WTC11 (cell line): ENCODE measurements at regions of chr11 and their contacts with region 1.

Region 1: DNA sequence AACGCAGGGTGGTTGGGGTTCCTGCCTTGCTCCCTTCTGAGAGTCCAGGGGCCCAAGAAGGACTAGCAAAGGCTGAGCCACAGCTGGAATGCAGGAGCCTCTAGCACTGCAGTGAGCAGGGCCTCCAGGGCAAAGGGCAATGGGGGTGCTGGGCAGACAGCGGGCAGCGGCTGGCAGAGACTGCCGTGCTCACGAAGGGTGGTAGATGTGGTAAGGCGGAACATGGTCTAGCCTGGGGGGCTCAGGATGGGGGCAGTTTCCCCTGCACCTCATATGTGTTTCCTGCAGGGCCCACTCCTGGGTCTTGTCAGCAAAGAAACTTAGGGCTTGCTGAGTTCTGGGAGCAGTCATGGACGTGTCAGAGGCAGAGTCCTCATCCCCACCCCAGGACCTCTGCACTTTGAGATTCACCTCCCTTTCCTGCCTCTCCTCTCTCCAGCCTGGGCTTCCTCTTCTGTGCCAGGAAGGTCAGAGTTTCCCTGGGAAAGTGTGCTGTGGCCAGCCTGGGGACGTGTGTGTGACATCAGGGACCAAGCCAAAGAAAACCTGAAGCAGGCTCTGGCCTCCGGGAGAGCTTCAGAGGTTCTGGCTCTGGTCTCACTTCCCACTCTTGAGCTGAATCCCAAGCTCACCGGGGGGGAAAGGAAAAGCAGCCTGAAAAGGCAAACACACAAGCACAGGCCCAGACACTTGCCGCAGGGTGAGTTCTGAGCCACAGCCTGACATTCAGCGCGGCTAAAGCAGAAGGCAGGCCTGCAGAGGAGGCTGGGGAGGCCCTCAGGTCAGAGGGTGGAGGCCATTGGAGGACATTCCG is 4.4 kb downstream of the MOGAT2 start:
- DNase-seq: no peak
- ATAC-seq: no peak
- H3K4me3 Mint-ChIP-seq: no peak overlapping the region
- H3K27ac Mint-ChIP-seq: no peak overlapping the region
- H3K4me1 Mint-ChIP-seq: peaks cover 2% of the 10 kb centered on the region
- H3K27me3 Mint-ChIP-seq: peaks cover 25% of the 10 kb centered on the region
- CTCF ChIP-seq: no peak

Region 2: DNA sequence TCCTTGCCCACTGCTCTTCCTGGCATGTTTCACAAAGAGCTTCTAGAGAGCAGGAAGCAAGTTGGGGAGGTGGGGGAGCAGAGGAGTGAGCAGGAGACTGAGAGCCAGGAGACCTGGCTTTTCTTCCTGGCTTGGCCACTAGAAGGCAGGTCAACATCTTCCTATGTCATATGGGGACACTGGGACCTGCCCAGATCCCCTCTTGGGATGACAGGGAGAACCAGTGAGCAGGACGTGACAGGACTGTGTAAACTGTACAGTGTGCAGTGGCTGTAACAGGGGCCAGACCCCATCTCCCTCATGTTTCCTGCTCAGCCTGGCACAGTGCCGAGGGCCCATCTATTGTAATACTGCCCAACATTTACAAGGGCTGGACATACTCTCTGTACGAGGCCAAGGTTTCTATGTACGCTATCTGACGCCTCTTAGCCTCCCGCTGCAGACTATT is 225.7 kb before region 1 on chr11:
- CTCF ChIA-PET with region 1: no interaction called
- POLR2A ChIA-PET with region 1: no interaction called
- DNase-seq: peak; percentile 33
- ATAC-seq: peak; percentile 84
- H3K4me3 Mint-ChIP-seq: no peak overlapping the region
- H3K27ac Mint-ChIP-seq: no peak overlapping the region
- H3K4me1 Mint-ChIP-seq: peaks cover 15% of the 10 kb centered on the region
- H3K27me3 Mint-ChIP-seq: no peaks in the 10 kb centered on the region
- CTCF ChIP-seq: no peak

Region 3: GRCh38 chr11:75706260-75706729 is 15.8 kb before region 1 on chr11:
- CTCF ChIA-PET with region 1: interaction called, 18 read pairs
- POLR2A ChIA-PET with region 1: interaction called, 3 read pairs
- DNase-seq: peak; percentile 80
- ATAC-seq: peak; percentile 99
- H3K4me3 Mint-ChIP-seq: no peak overlapping the region
- H3K27ac Mint-ChIP-seq: no peak overlapping the region
- H3K4me1 Mint-ChIP-seq: no peaks in the 10 kb centered on the region
- H3K27me3 Mint-ChIP-seq: peaks cover 19% of the 10 kb centered on the region
- CTCF ChIP-seq: peak; percentile 96

Region 4: DNA sequence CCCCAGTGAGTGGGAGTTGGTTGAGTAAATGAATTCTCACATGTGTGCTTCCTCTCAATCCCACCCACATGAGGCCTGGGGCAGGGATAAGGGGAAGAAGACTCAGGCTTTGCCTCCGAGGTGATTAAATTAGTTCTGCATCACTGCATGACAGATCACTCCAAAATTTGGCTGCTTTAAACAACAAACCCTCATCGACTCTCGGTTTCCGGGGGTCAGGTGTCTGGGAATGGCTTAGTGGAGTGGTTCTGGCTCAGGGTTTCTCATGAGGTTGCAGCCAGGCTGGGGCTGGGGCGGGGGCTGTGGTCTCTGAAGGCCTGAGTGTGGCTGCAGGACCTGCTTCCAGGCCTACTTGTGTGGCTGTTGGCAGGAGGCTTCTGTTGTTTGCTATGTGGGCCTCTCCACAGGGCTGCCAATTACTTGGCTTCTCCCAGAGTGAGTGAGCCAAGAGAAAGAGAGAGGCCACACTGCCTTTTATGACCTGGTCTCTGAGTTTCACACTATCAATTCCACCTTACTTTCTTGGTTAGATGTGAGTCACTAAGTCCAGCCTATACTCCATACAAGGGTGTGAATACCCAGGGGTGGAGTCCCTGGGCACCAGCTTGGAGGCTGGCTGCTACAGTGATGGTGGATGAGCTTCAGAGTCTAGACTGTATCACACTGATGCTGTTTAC is 11.5 kb after region 1 on chr11:
- CTCF ChIA-PET with region 1: interaction called, 10 read pairs
- POLR2A ChIA-PET with region 1: no interaction called
- DNase-seq: no peak
- ATAC-seq: no peak
- H3K4me3 Mint-ChIP-seq: no peak overlapping the region
- H3K27ac Mint-ChIP-seq: no peak overlapping the region
- H3K4me1 Mint-ChIP-seq: 0 out of 2 replicates have a peak, but pooled peaks cover 3% of the 10 kb centered on the region
- H3K27me3 Mint-ChIP-seq: no peaks in the 10 kb centered on the region; the same call in 1 of the 2 replicates
- CTCF ChIP-seq: no peak

Region 5: DNA sequence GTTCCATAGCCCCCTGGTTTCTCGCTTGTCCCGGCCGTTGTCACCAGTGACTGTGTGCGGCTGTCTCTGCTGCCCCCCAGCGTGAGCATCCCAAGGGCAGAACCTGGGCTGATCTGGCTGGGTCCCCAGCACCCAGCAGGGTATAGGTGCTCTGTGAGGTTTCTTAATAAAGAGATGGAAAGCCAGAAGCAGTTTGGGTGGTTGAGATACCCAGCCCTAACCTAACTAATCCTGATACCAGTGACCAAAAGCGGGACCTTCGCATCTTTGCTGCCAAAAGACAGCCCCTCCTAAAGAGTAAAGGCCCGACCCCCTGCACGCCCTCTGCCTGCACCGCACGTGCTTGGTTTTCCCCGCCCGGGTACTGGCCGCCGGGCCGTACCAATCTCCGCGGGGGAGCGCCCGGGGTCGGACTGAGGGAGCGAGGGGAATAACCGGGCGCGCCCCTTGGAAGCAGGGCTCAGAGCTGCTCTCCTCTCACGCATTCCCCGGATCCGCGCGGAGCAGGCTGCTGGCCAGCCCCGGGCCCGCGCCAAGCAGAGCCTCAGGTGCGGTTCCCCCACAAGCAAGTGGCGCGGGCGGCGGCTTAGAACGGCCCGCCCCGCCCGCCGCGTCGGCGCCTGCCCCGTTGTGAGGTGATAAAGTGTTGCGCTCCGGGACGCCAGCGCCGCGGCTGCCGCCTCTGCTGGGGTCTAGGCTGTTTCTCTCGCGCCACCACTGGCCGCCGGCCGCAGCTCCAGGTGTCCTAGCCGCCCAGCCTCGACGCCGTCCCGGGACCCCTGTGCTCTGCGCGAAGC is 46.2 kb after region 1 on chr11 and contains the start of gene DGAT2:
- CTCF ChIA-PET with region 1: interaction called, 11 read pairs
- POLR2A ChIA-PET with region 1: no interaction called
- DNase-seq: peak; percentile 67
- ATAC-seq: peak; percentile 63
- H3K4me3 Mint-ChIP-seq: peak within 1 kb of the TSS; percentile 65
- H3K27ac Mint-ChIP-seq: no peak within 1 kb of the TSS
- H3K4me1 Mint-ChIP-seq: peaks cover 23% of the 10 kb centered on the region
- H3K27me3 Mint-ChIP-seq: peaks cover 71% of the 10 kb centered on the region
- CTCF ChIP-seq: no peak
- total RNA-seq, gene DGAT2: 1.6 to 3.3 TPM (median 2.8 TPM) in 3 replicates

Region 6: GRCh38 chr11:75773595-75774353 is 51.7 kb after region 1 on chr11:
- CTCF ChIA-PET with region 1: interaction called, 15 read pairs
- POLR2A ChIA-PET with region 1: no interaction called
- DNase-seq: no peak
- ATAC-seq: no peak
- H3K4me3 Mint-ChIP-seq: no peak overlapping the region
- H3K27ac Mint-ChIP-seq: no peak overlapping the region
- H3K4me1 Mint-ChIP-seq: peaks cover 27% of the 10 kb centered on the region
- H3K27me3 Mint-ChIP-seq: peaks cover 44% of the 10 kb centered on the region
- CTCF ChIP-seq: no peak

Region 7: DNA sequence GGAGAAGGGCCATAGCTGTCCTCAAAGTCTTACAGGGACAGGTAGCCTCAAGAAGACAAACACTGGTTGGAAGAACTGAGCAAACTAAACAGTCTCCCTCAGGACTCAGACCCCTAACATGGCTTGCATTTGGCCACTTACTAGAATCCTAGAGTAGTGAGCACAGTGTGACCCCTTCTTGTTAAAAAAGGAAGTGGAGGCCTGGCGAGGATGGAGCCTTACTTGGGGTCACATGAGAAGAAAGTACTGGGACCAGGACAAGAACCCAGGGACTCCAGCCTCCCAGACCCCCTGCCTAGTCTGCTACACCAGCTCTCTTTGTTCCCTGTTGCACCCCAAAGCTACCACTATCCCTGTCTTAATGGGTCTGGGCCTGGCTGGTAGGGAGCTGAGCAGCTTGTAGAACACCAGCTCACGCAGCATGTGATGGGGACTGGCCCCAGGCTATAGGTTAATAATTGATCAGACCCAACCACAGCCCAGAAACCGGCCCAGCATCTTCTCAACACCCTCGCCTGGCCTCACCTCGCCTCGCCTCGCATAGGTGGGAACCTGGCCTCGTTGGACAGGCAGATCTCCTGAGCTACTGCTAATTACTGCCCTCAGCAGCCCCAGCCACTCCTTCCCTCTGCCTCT is 64.2 kb after region 1 on chr11:
- CTCF ChIA-PET with region 1: interaction called, 10 read pairs
- POLR2A ChIA-PET with region 1: no interaction called
- DNase-seq: no peak
- ATAC-seq: no peak
- H3K4me3 Mint-ChIP-seq: no peak overlapping the region
- H3K27ac Mint-ChIP-seq: no peak overlapping the region
- H3K4me1 Mint-ChIP-seq: no peaks in the 10 kb centered on the region
- H3K27me3 Mint-ChIP-seq: no peaks in the 10 kb centered on the region
- CTCF ChIP-seq: no peak